Keratinocyte (primary cell): ENCODE measurements at regions of chr9 and their contacts with region 1.

Region 1: DNA sequence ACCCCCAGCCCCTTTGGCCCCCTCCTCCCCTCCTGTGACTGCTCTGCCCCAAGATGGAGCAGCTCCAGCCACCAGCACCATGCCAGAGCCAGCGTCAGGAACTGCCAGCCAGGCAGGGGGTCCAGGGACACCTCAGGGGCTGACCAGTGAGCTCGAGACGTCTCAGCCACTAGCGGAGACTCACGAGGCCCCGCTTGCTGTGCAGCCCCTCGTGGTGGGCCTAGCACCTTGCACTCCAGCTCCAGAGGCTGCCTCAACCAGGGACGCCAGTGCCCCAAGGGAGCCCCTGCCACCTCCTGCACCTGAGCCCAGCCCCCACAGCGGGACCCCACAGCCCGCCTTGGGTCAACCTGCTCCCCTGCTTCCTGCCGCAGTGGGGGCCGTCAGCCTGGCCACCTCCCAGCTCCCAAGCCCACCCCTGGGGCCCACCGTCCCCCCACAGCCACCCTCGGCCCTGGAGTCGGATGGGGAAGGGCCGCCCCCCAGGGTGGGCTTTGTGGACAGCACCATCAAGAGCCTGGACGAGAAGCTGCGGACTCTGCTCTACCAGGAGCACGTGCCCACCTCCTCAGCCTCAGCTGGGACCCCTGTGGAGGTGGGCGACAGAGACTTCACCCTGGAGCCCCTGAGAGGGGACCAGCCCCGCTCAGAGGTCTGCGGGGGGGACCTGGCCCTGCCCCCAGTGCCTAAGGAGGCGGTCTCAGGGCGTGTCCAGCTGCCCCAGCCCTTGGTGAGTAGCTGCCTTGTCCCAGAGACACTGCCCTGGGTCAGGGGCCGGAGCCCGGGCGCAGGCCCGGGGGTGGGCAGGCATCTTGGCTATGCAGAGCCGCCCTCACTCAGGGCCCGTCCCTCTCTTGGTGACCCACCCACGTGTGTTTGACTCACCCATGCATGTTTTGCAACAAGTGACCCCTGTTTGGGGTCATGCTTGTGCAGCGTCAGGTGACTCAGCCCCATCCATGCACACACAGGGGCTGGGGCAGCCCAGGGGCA is 105.2 kb downstream of the WNK2 start:
- DNase-seq: no peak
- H3K4me3 ChIP-seq: no peak overlapping the region
- H3K27ac ChIP-seq: no peak overlapping the region
- H3K4me1 ChIP-seq: no peaks in the 10 kb centered on the region
- H3K27me3 ChIP-seq: peaks cover 11% of the 10 kb centered on the region
- CTCF ChIP-seq: no peak

Region 2: GRCh38 chr9:93159601-93160471 is 129.4 kb before region 1 on chr9:
- dilution Hi-C with region 1: loop called (anchors 10 kb)
- DNase-seq: no peak
- H3K4me3 ChIP-seq: no peak overlapping the region
- H3K27ac ChIP-seq: no peak overlapping the region
- H3K4me1 ChIP-seq: no peaks in the 10 kb centered on the region
- H3K27me3 ChIP-seq: no peaks in the 10 kb centered on the region
- CTCF ChIP-seq: peak; percentile 86 to 100 (median 98)

Region 3: DNA sequence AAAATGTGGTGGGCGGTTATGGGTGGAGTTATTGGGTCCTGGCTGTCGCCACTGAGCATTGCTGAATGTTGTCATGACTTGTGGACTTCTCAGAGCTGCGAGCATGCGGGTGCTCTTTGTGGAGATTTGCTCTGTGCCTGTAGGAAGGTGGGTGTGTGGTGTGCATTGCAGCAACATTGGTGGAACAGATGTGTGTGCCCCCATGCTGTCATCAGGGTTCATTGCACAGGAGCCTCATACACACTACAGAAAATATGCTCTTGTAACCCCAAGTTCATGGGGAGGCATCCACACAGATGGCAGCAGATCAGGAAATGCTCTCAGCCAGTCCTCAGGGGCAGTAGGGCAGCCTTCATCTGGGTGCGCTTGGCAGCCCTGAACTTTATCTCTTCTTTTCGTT is 231.3 kb after region 1 on chr9:
- dilution Hi-C with region 1: no loop called
- DNase-seq: no peak
- H3K4me3 ChIP-seq: no peak overlapping the region
- H3K27ac ChIP-seq: no peak overlapping the region
- H3K4me1 ChIP-seq: no peaks in the 10 kb centered on the region
- H3K27me3 ChIP-seq: no peaks in the 10 kb centered on the region
- CTCF ChIP-seq: no peak